ENCODE measurements at regions of chr1 and their contacts with region 1.

Region 1: GRCh38 chr1:206912445-206913095 is 9.2 kb downstream of the FCMR start:
- DNase-seq: peak; percentile 38 to 74 (median 60)
- ATAC-seq: peak; percentile 61 to 67
- H3K4me3 ChIP-seq: no peak overlapping the region
- H3K27ac ChIP-seq: no peak overlapping the region
- H3K4me1 ChIP-seq: no peaks in the 10 kb centered on the region
- H3K27me3 ChIP-seq: no peaks in the 10 kb centered on the region

Region 2: GRCh38 chr1:206469933-206470691 is 442.5 kb before region 1 on chr1 and contains the start of gene IKBKE:
- intact Hi-C with region 1: loop called in 1 of 4 experiments (anchors 10 kb)
- DNase-seq: peak; percentile 54 to 79 (median 75)
- ATAC-seq: peak; percentile 64 to 74
- H3K4me3 ChIP-seq: peak within 1 kb of the TSS; percentile 48
- H3K27ac ChIP-seq: no peak within 1 kb of the TSS
- H3K4me1 ChIP-seq: peaks cover 7% of the 10 kb centered on the region
- H3K27me3 ChIP-seq: no peaks in the 10 kb centered on the region
- total RNA-seq, gene IKBKE: 1.1 to 2.0 (median 1.5) TPM

Region 3: DNA sequence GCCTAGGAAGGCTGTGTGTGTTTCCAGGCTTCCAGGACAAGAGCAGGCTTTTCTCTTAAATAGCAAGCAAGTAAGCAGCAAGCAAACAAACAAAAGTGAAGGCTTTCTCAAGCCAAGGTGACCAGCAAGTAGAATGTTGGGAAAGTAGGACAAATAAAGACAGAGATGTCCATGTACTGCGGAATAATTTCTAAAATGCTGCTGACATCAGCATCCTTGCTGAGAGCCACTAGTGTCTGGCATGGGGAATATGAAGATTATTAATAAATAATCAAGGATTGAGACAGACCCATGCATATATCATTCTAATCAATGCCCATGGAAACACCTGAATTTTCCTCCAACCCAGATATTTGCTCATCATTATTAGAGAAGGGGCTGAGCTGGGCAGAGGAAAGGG is 283.7 kb before region 1 on chr1:
- intact Hi-C with region 1: loop called in 3 of 4 experiments (anchors 5 to 10 kb)
- DNase-seq: no peak
- ATAC-seq: no peak
- H3K4me3 ChIP-seq: no peak overlapping the region
- H3K27ac ChIP-seq: no peak overlapping the region
- H3K4me1 ChIP-seq: no peaks in the 10 kb centered on the region
- H3K27me3 ChIP-seq: no peaks in the 10 kb centered on the region

Region 4: GRCh38 chr1:206725109-206725963 is 187.2 kb before region 1 on chr1:
- intact Hi-C with region 1: loop called (anchors 5 to 10 kb)
- DNase-seq: peak in 1 of 3 donors; percentile 52
- ATAC-seq: no peak
- H3K4me3 ChIP-seq: no peak overlapping the region
- H3K27ac ChIP-seq: peak overlapping the region; percentile 48
- H3K4me1 ChIP-seq: peaks cover 35% of the 10 kb centered on the region
- H3K27me3 ChIP-seq: no peaks in the 10 kb centered on the region

Region 5: DNA sequence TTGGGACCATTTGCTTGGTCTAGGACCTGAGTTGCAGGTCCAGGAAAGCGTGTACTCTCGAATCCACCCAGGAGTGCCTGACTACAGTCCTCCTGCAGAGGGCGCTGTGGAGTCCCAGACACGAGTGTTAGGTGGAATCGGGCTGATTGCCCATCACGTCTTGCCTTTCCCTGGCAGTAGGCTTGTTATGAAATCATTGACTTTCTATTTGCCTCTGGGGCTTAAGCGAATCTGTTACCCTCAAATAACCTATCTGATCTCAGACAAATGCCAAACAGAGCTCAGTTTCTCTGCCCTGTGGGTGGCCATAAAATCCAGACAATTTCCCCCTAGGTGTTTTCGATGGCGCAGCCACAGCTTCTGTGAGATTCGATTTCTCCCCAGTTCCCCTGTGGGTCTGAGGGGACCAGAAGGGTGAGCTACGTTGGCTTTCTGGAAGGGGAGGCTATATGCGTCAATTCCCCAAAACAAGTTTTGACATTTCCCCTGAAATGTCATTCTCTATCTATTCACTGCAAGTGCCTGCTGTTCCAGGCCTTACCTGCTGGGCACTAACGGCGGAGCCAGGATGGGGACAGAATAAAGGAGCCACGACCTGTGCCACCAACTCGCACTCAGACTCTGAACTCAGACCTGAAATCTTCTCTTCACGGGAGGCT is 47.4 kb before region 1 on chr1 and contains the start of gene IL20:
- intact Hi-C with region 1: loop called in 2 of 4 experiments (anchors 5 kb)
- DNase-seq: peak; percentile 72 to 87 (median 86)
- ATAC-seq: peak; percentile 56 to 66
- H3K4me3 ChIP-seq: no peak within 1 kb of the TSS
- H3K27ac ChIP-seq: no peak within 1 kb of the TSS
- H3K4me1 ChIP-seq: no peaks in the 10 kb centered on the region
- H3K27me3 ChIP-seq: no peaks in the 10 kb centered on the region
- total RNA-seq, gene IL20: not detected

Measured in right cardiac atrium (tissue), 5 donors.